Mammary epithelial cell (primary cell): ENCODE measurements at regions of chr22 and their contacts with region 1.

Region 1: DNA sequence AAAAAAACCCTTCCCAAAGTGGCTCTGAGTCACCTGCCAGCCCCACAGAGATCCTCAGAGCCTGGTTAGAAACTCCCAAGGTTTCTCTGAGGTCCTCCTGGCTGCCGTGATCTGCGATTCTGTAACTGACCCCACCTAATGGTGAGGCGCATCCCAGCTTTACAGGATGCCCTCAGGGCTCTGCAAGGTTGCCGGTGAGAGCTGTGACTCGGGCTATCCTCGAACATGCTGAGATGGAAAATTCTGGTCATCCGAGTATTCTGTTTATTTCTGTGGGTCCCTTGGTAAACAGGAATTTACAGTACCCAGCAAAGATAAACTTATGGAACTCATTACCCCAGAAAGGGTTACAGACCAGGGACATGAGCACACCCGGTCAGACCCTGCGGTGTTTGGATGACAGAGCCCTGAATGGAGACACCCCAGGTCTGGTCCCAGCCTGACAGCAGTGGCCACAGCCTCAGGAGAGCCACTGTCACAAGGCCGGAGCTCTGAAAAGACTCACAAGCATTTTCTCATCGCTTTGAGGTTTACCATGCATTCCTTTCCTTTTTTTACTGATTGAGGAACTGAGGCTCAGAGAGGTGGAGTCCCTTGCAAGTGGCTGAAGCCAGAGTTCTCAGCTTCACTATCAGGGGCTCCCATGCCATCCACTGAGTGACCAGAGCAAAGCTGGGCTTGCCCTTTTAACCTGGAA is 22.2 kb downstream of the LIF start:
- DNase-seq: peak; percentile 93
- H3K4me3 ChIP-seq: no peak overlapping the region
- H3K27ac ChIP-seq: peak overlapping the region; percentile 86
- H3K4me1 ChIP-seq: peaks cover 58% of the 10 kb centered on the region
- H3K27me3 ChIP-seq: no peaks in the 10 kb centered on the region
- CTCF ChIP-seq: peak in 1 of 2 donors; percentile 24

Region 2: GRCh38 chr22:30116362-30117117 is 107.8 kb before region 1 on chr22:
- CTCF ChIA-PET with region 1: no interaction called
- dilution Hi-C with region 1: no loop called
- in situ Hi-C with region 1: no loop called
- intact Hi-C with region 1: no loop called
- DNase-seq: peak; percentile 76
- H3K4me3 ChIP-seq: no peak overlapping the region
- H3K27ac ChIP-seq: peak overlapping the region; percentile 58
- H3K4me1 ChIP-seq: peaks cover 16% of the 10 kb centered on the region
- H3K27me3 ChIP-seq: no peaks in the 10 kb centered on the region
- CTCF ChIP-seq: no peak

Region 3: GRCh38 chr22:30159561-30160353 is 64.6 kb before region 1 on chr22:
- CTCF ChIA-PET with region 1: no interaction called
- dilution Hi-C with region 1: no loop called
- in situ Hi-C with region 1: no loop called
- intact Hi-C with region 1: no loop called
- DNase-seq: peak; percentile 52
- H3K4me3 ChIP-seq: no peak overlapping the region
- H3K27ac ChIP-seq: no peak overlapping the region
- H3K4me1 ChIP-seq: no peaks in the 10 kb centered on the region
- H3K27me3 ChIP-seq: no peaks in the 10 kb centered on the region
- CTCF ChIP-seq: no peak

Region 4: GRCh38 chr22:30178181-30179126 is 45.9 kb before region 1 on chr22:
- CTCF ChIA-PET with region 1: no interaction called
- dilution Hi-C with region 1: loop called (anchors 5 kb)
- in situ Hi-C with region 1: no loop called
- intact Hi-C with region 1: loop called (anchors 5 kb)
- DNase-seq: no peak
- H3K4me3 ChIP-seq: no peak overlapping the region
- H3K27ac ChIP-seq: no peak overlapping the region
- H3K4me1 ChIP-seq: peaks cover 18% of the 10 kb centered on the region
- H3K27me3 ChIP-seq: no peaks in the 10 kb centered on the region
- CTCF ChIP-seq: peak in 1 of 2 donors; percentile 16

Region 5: DNA sequence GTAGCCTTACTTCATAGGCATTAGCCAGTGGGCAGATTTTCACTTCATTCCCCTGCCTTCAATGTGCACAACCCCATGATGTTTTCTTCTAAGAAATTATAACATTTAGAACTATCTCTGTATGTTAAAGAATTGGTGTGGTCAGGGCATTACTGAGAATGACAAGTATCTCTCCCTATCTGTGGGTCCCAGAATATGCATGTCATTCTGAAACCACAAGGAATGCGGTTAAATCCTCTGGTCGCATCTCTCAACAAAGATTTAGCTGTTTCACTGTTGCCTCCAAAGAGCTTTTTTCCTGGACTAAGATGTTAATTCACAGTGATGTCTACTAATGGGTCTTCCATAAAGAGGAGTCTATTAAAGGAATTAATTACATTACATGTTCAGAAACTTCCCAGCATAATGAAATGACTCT is 40.4 kb before region 1 on chr22:
- CTCF ChIA-PET with region 1: interaction called, 5 read pairs
- dilution Hi-C with region 1: loop called (anchors 5 kb)
- in situ Hi-C with region 1: no loop called
- intact Hi-C with region 1: loop called (anchors 5 kb)
- DNase-seq: peak; percentile 27
- H3K4me3 ChIP-seq: no peak overlapping the region
- H3K27ac ChIP-seq: no peak overlapping the region
- H3K4me1 ChIP-seq: peaks cover 4% of the 10 kb centered on the region
- H3K27me3 ChIP-seq: no peaks in the 10 kb centered on the region
- CTCF ChIP-seq: no peak

Region 6: GRCh38 chr22:30205281-30206115 is 18.8 kb before region 1 on chr22:
- CTCF ChIA-PET with region 1: no interaction called
- dilution Hi-C with region 1: no loop called
- in situ Hi-C with region 1: no loop called
- intact Hi-C with region 1: loop called (anchors 1 kb)
- DNase-seq: peak; percentile 99
- H3K4me3 ChIP-seq: no peak overlapping the region
- H3K27ac ChIP-seq: peak overlapping the region; percentile 97
- H3K4me1 ChIP-seq: peaks cover 60% of the 10 kb centered on the region
- H3K27me3 ChIP-seq: no peaks in the 10 kb centered on the region
- CTCF ChIP-seq: no peak

Region 7: DNA sequence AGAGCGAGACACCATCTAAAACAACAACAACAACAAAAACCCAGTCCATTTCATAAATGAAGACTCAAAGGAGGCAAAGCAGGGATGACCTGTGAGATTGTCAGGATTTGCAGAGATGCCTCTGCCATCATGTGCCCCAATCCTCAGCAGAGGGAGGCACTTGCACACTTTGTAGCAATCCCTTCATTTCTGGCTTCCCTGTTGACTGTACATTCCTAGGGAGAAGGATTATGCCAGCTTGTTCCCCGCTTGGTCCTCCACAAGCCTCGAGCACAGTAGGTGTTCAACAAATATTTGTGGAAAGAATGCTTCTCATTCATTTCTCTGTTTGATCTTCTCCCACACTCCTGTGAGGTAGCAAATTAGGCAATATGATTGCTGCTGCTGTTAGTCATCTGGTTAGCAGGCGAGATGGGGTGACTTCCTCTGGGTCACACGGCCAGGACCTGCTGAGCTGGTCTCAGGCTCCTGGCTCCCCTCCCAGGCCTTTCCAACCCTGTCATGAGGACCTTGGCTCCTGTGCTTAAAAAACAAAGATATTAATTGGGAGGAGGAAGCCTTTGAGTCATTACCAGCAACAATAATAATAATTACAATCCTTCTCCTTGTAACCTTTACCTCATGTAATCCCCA is 11.8 kb before region 1 on chr22:
- CTCF ChIA-PET with region 1: interaction called, 4 read pairs
- dilution Hi-C with region 1: no loop called
- in situ Hi-C with region 1: no loop called
- intact Hi-C with region 1: loop called (anchors 1 kb)
- DNase-seq: peak; percentile 99
- H3K4me3 ChIP-seq: no peak overlapping the region
- H3K27ac ChIP-seq: peak overlapping the region; percentile 96
- H3K4me1 ChIP-seq: peaks cover 63% of the 10 kb centered on the region
- H3K27me3 ChIP-seq: no peaks in the 10 kb centered on the region
- CTCF ChIP-seq: peak in 1 of 2 donors; percentile 37